ENCODE measurements at regions of chr6 and their contacts with region 1.

Region 1: DNA sequence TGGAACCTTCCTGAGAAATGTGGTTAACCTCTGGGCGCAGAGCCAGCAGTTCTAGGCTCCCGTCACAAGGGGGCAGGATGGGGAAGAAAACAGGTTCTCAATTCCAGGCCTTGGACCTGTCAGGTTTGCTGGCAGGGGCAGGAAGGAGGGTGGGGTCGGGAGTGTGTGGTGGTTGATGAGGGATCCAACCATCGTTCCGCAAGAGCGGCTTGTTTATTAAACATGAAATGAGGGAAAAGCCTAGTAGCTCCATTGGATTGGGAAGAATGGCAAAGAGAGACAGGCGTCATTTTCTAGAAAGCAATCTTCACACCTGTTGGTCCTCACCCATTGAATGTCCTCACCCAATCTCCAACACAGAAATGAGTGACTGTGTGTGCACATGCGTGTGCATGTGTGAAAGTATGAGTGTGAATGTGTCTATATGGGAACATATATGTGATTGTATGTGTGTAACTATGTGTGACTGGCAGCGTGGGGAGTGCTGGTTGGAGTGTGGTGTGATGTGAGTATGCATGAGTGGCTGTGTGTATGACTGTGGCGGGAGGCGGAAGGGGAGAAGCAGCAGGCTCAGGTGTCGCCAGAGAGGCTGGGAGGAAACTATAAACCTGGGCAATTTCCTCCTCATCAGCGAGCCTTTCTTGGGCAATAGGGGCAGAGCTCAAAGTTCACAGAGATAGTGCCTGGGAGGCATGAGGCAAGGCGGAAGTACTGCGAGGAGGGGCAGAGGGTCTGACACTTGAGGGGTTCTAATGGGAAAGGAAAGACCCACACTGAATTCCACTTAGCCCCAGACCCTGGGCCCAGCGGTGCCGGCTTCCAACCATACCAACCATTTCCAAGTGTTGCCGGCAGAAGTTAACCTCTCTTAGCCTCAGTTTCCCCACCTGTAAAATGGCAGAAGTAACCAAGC is 29.6 kb downstream of the SRSF3 start:
- DNase-seq: peak; percentile 92
- H3K4me3 Mint-ChIP-seq: no peak overlapping the region
- H3K27ac Mint-ChIP-seq: peak overlapping the region; percentile 0
- H3K4me1 Mint-ChIP-seq: peaks cover 37% of the 10 kb centered on the region
- H3K27me3 Mint-ChIP-seq: no peaks in the 10 kb centered on the region
- CTCF ChIP-seq: peak; percentile 92

Region 2: GRCh38 chr6:36187446-36187845 is 436.4 kb before region 1 on chr6:
- CTCF ChIA-PET with region 1: no interaction called
- intact Hi-C with region 1: no loop called
- DNase-seq: no peak
- H3K4me3 Mint-ChIP-seq: no peak overlapping the region
- H3K27ac Mint-ChIP-seq: no peak overlapping the region
- H3K4me1 Mint-ChIP-seq: peaks cover 8% of the 10 kb centered on the region
- H3K27me3 Mint-ChIP-seq: no peaks in the 10 kb centered on the region
- CTCF ChIP-seq: no peak

Region 3: DNA sequence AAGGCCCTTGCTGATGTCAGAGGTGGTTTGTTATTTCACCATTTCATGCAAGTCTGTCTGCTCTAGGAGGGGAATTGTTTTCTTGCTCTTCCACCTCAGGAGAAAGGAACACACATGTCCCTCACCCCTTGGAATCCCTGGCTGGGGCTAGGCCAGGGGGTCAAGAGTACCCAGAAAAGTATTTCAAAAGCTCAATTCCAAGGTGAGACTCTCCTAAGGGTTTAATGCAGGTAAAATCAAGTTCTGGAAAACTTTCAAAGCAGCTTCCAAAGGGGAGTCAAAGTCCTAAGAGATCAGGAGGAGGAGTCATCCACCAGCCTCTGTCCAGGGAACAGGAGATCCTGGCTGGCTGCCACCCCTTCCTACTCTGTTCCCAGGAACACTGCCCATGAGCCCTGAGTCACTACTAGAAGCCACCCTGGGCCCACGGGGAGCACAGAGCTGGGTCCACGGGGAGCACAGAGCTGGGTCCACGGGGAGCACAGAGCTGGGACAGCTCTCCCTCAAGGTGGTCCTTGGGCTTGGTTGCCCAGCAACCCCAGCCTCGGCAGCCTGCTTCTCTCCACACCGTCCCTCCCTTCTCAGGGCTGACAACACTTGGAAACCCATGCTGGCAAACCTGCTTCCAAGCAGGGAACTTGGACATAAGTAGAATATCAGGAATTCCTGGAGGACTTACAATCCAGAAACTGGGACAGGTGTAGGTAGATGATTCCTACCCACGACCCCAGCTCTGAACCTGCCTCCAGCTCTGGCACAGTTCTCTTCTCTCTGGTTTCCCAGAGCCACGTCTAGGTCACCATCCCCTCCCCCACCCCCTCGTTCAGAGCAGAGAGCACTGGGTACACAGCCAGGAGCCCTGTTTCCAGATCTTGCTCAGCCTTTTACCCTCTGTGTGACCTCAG is 19.4 kb after region 1 on chr6:
- CTCF ChIA-PET with region 1: interaction called, 10 read pairs
- intact Hi-C with region 1: no loop called
- DNase-seq: peak; percentile 37
- H3K4me3 Mint-ChIP-seq: no peak overlapping the region
- H3K27ac Mint-ChIP-seq: no peak overlapping the region
- H3K4me1 Mint-ChIP-seq: no peaks in the 10 kb centered on the region
- H3K27me3 Mint-ChIP-seq: no peaks in the 10 kb centered on the region
- CTCF ChIP-seq: no peak

Region 4: DNA sequence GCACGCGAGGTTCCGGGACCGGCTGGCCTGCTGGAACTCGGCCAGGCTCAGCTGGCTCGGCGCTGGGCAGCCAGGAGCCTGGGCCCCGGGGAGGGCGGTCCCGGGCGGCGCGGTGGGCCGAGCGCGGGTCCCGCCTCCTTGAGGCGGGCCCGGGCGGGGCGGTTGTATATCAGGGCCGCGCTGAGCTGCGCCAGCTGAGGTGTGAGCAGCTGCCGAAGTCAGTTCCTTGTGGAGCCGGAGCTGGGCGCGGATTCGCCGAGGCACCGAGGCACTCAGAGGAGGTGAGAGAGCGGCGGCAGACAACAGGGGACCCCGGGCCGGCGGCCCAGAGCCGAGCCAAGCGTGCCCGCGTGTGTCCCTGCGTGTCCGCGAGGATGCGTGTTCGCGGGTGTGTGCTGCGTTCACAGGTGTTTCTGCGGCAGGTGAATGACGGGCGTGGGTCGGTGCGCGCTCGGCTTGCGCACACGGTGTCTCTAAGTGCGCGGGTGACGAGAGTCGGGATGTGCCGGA is 54.8 kb after region 1 on chr6 and contains the start of gene CDKN1A:
- CTCF ChIA-PET with region 1: interaction called, 4 read pairs
- intact Hi-C with region 1: loop called (anchors 1 kb)
- DNase-seq: peak; percentile 96
- H3K4me3 Mint-ChIP-seq: peak within 1 kb of the TSS; percentile 99
- H3K27ac Mint-ChIP-seq: peak within 1 kb of the TSS; percentile 85
- H3K4me1 Mint-ChIP-seq: peaks cover 65% of the 10 kb centered on the region
- H3K27me3 Mint-ChIP-seq: no peaks in the 10 kb centered on the region
- CTCF ChIP-seq: no peak
- total RNA-seq, gene CDKN1A: 26.5 and 33.7 TPM in 2 replicates

Region 5: GRCh38 chr6:36724514-36725390 is 100.9 kb after region 1 on chr6:
- CTCF ChIA-PET with region 1: no interaction called
- intact Hi-C with region 1: loop called (anchors 1 kb)
- DNase-seq: peak; percentile 89
- H3K4me3 Mint-ChIP-seq: no peak overlapping the region
- H3K27ac Mint-ChIP-seq: no peak overlapping the region
- H3K4me1 Mint-ChIP-seq: peaks cover 11% of the 10 kb centered on the region
- H3K27me3 Mint-ChIP-seq: no peaks in the 10 kb centered on the region
- CTCF ChIP-seq: peak; percentile 53

Region 6: DNA sequence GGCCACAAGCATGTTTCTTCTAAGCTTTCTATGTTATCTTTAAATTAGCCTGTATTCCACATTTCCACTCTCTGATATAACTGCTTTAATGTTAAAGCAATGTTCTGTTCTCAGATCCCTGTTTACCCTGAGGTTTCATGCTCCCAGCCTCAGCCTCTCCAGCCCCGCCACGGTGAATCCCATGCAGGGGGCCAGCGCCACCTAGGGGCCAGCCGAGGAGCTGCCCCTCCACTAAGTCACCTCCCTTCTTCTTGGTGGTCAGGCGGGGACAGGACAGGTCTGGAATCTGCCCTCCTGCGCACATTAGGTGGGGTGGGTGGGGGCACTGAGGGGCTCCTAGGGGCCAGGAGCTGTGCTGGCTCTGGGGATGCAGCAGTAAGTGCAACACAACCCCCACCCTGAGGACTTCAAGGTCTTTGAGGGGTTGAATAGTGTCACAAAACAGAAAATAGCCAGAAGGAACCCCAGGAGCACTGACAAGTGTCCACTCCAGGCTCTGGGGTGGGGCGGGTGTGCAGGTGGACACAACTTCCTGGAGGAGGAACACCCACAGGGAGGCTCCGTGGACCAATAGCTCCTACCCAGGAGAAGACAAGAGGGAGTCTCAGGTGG is 135.5 kb after region 1 on chr6:
- CTCF ChIA-PET with region 1: interaction called, 4 read pairs
- intact Hi-C with region 1: loop called (anchors 1 kb)
- DNase-seq: peak; percentile 94
- H3K4me3 Mint-ChIP-seq: no peak overlapping the region
- H3K27ac Mint-ChIP-seq: no peak overlapping the region
- H3K4me1 Mint-ChIP-seq: peaks cover 49% of the 10 kb centered on the region
- H3K27me3 Mint-ChIP-seq: no peaks in the 10 kb centered on the region
- CTCF ChIP-seq: peak; percentile 94